ENCODE measurements at regions of chr1 and their contacts with region 1.

Region 1: GRCh38 chr1:110570307-110570706 is 35.9 kb downstream of the KCNA2 start:
- DNase-seq: no peak
- ATAC-seq: no peak
- H3K4me3 ChIP-seq: no peak overlapping the region
- H3K27ac ChIP-seq: no peak overlapping the region
- H3K4me1 ChIP-seq: no peaks in the 10 kb centered on the region
- H3K27me3 ChIP-seq: peaks cover 0 to 50% (median 30%) of the 10 kb centered on the region in 7 donors
- CTCF ChIP-seq: no peak

Region 2: GRCh38 chr1:110597966-110598365 is 27.7 kb after region 1 on chr1:
- intact Hi-C with region 1: loop called in 1 of 10 experiments (anchors 2 kb)
- DNase-seq: no peak
- ATAC-seq: no peak
- H3K4me3 ChIP-seq: no peak overlapping the region
- H3K27ac ChIP-seq: no peak overlapping the region
- H3K4me1 ChIP-seq: peaks cover 0 to 8% (median 0%) of the 10 kb centered on the region in 9 donors
- H3K27me3 ChIP-seq: peaks cover 0 to 35% (median 4%) of the 10 kb centered on the region in 7 donors
- CTCF ChIP-seq: no peak